Activated CD4-positive, alpha-beta T cell treated with anti-CD3 and anti-CD28 coated beads, Interleukin-2, amount 10 ng/mL, durations not matched to agents 24 days and 14 days (primary cell): ENCODE measurements at regions of chr13 and their contacts with region 1.

Region 1: GRCh38 chr13:52850396-52851136 is 2.1 kb upstream of the PCDH8 start:
- DNase-seq: peak; percentile 83
- H3K4me3 Mint-ChIP-seq: peak overlapping the region; percentile 71
- H3K27ac Mint-ChIP-seq: peak overlapping the region; percentile 41
- H3K4me1 Mint-ChIP-seq: peaks cover 11% of the 10 kb centered on the region
- H3K27me3 Mint-ChIP-seq: peaks cover 52% of the 10 kb centered on the region

Region 2: GRCh38 chr13:52617070-52618060 is 233.2 kb before region 1 on chr13:
- intact Hi-C with region 1: loop called (anchors 5 kb)
- DNase-seq: peak; percentile 95
- H3K4me3 Mint-ChIP-seq: peak overlapping the region; percentile 94
- H3K27ac Mint-ChIP-seq: peak overlapping the region; percentile 94
- H3K4me1 Mint-ChIP-seq: peaks cover 14% of the 10 kb centered on the region
- H3K27me3 Mint-ChIP-seq: peaks cover 9% of the 10 kb centered on the region

Region 3: GRCh38 chr13:52665325-52665724 is 185.2 kb before region 1 on chr13:
- intact Hi-C with region 1: loop called (anchors 5 kb)
- DNase-seq: no peak
- H3K4me3 Mint-ChIP-seq: no peak overlapping the region
- H3K27ac Mint-ChIP-seq: no peak overlapping the region
- H3K4me1 Mint-ChIP-seq: no peaks in the 10 kb centered on the region
- H3K27me3 Mint-ChIP-seq: no peaks in the 10 kb centered on the region

Region 4: GRCh38 chr13:52723181-52723580 is 127.4 kb before region 1 on chr13:
- intact Hi-C with region 1: no loop called
- DNase-seq: no peak
- H3K4me3 Mint-ChIP-seq: no peak overlapping the region
- H3K27ac Mint-ChIP-seq: no peak overlapping the region
- H3K4me1 Mint-ChIP-seq: no peaks in the 10 kb centered on the region
- H3K27me3 Mint-ChIP-seq: peaks cover 11% of the 10 kb centered on the region

Region 5: GRCh38 chr13:52738719-52739467 is 111.7 kb before region 1 on chr13:
- intact Hi-C with region 1: loop called (anchors 5 kb)
- DNase-seq: peak; percentile 59
- H3K4me3 Mint-ChIP-seq: peak overlapping the region; percentile 38
- H3K27ac Mint-ChIP-seq: no peak overlapping the region
- H3K4me1 Mint-ChIP-seq: peaks cover 2% of the 10 kb centered on the region
- H3K27me3 Mint-ChIP-seq: peaks cover 47% of the 10 kb centered on the region

Region 6: DNA sequence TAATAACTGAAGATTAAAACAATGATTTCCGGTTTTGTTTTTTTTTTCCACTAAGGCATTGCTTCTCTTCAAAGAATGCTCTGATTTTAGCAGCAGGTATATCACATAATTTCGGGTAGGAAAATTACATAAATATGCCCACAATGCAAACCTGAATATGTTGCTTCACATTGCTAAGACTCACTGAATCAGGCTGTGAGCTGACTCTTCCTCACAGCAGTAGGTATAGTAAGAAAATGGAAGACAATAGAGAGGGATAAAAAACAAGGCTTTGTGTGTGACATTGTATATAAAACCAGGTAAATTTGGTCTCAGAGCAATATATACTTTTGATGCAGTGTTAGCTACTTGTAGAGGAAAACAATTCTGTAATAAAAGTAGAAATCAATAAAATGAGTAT is 1533.0 kb after region 1 on chr13:
- intact Hi-C with region 1: no loop called
- DNase-seq: no peak
- H3K4me3 Mint-ChIP-seq: no peak overlapping the region
- H3K27ac Mint-ChIP-seq: no peak overlapping the region
- H3K4me1 Mint-ChIP-seq: no peaks in the 10 kb centered on the region
- H3K27me3 Mint-ChIP-seq: no peaks in the 10 kb centered on the region